Ovary (tissue), 10 donors: ENCODE measurements at regions of chr7 and their contacts with region 1.

Region 1: GRCh38 chr7:26585081-26585641 is 279.2 kb downstream of the SKAP2 start:
- DNase-seq: no peak
- H3K4me3 ChIP-seq: no peak overlapping the region
- H3K27ac ChIP-seq: no peak overlapping the region
- H3K4me1 ChIP-seq: no peaks in the 10 kb centered on the region
- H3K27me3 ChIP-seq: no peaks in the 10 kb centered on the region
- CTCF ChIP-seq: no peak
- EP300 ChIP-seq: no peak
- POLR2A ChIP-seq: no peak

Region 2: DNA sequence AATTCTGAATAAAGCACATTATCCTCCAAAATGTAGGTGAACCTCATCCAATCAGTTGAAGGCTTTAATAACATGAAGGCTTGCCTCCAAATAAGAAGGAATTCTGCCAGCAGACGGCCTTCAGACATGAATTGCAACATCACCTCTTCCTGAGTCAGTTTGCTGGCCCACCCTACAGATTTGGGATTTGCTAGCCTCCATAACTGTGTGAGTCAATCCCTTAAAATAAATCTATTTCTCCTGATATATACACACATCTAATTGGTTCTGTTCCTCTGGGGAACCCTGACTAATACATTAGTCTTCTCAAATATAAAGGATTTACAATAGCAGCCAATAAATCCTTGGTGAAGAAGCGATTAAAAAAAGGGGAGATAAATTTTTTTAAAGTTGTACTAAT is 1570.4 kb before region 1 on chr7:
- intact Hi-C with region 1: loop called in 1 of 4 experiments (anchors 5 kb)
- DNase-seq: peak in 1 of 5 donors; percentile 27
- H3K4me3 ChIP-seq: no peak overlapping the region
- H3K27ac ChIP-seq: no peak overlapping the region
- H3K4me1 ChIP-seq: no peaks in the 10 kb centered on the region
- H3K27me3 ChIP-seq: no peaks in the 10 kb centered on the region
- CTCF ChIP-seq: no peak
- EP300 ChIP-seq: no peak
- POLR2A ChIP-seq: no peak

Region 3: GRCh38 chr7:26460351-26461085 is 124.6 kb before region 1 on chr7:
- intact Hi-C with region 1: no loop called
- DNase-seq: no peak
- H3K4me3 ChIP-seq: no peak overlapping the region
- H3K27ac ChIP-seq: no peak overlapping the region
- H3K4me1 ChIP-seq: no peaks in the 10 kb centered on the region
- H3K27me3 ChIP-seq: no peaks in the 10 kb centered on the region
- CTCF ChIP-seq: no peak
- EP300 ChIP-seq: no peak
- POLR2A ChIP-seq: no peak